GM12878 (cell line): ENCODE measurements at regions of chr12 and their contacts with region 1.

Region 1: GRCh38 chr12:89960011-89960507 is 251.4 kb upstream of the ATP2B1 start:
- DNase-seq: peak; percentile 68
- ATAC-seq: peak; percentile 90
- H3K4me3 ChIP-seq: peak overlapping the region; percentile 65; the same call in 1 of the 2 replicates
- H3K27ac ChIP-seq: peak overlapping the region; percentile 71
- H3K4me1 ChIP-seq: peaks cover 9% of the 10 kb centered on the region
- H3K27me3 ChIP-seq: no peaks in the 10 kb centered on the region
- CTCF ChIP-seq: no peak
- EP300 ChIP-seq: peak in 1 of 2 experiments; percentile 55; a peak in 1 of 4 replicates
- POLR2A ChIP-seq: no peak
- RAD21 ChIP-seq: no peak

Region 2: DNA sequence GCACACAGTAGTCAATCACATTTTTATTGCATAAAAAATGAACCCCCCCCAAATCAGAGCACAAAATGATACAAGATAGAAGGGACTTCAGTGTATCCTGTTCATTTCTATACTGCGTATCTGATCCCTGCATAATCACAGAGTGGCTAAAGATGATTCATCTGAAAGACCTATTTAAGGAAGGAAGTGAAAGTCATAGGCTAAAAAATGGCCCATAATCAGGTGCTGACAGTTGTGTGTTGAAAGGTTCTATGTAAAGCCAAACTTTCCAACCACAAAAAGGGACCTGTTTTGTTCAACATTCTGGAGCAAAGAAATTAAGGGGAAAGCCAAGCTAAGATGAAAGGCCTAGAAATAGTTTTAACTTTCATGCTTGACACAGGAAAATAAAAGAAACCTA is 103.6 kb before region 1 on chr12:
- CTCF ChIA-PET with region 1: no interaction called
- POLR2A ChIA-PET with region 1: interaction called, 12 read pairs
- RAD21 ChIA-PET with region 1: interaction called, 7 read pairs
- SMC1A ChIA-PET with region 1: interaction called, 9 read pairs
- in situ Hi-C with region 1: no loop called
- intact Hi-C with region 1: no loop called
- DNase-seq: peak; percentile 85
- ATAC-seq: peak; percentile 90
- H3K4me3 ChIP-seq: no peak overlapping the region
- H3K27ac ChIP-seq: peak overlapping the region; percentile 42
- H3K4me1 ChIP-seq: peaks cover 43% of the 10 kb centered on the region
- H3K27me3 ChIP-seq: no peaks in the 10 kb centered on the region
- CTCF ChIP-seq: no peak
- EP300 ChIP-seq: peak; percentile 97
- POLR2A ChIP-seq: no peak
- RAD21 ChIP-seq: peak; percentile 27; the same call in 1 of the 2 replicates

Region 3: GRCh38 chr12:89862511-89863179 is 97.4 kb before region 1 on chr12:
- CTCF ChIA-PET with region 1: interaction called, 3 read pairs
- POLR2A ChIA-PET with region 1: interaction called, 4 read pairs
- RAD21 ChIA-PET with region 1: interaction called, 10 read pairs
- SMC1A ChIA-PET with region 1: interaction called, 15 read pairs
- in situ Hi-C with region 1: no loop called
- intact Hi-C with region 1: no loop called
- DNase-seq: peak; percentile 79
- ATAC-seq: peak; percentile 75
- H3K4me3 ChIP-seq: peak overlapping the region; percentile 60
- H3K27ac ChIP-seq: peak overlapping the region; percentile 89
- H3K4me1 ChIP-seq: peaks cover 39% of the 10 kb centered on the region
- H3K27me3 ChIP-seq: no peaks in the 10 kb centered on the region
- CTCF ChIP-seq: no peak
- EP300 ChIP-seq: peak in 1 of 2 experiments; percentile 17; a peak in 1 of 4 replicates
- POLR2A ChIP-seq: peak; percentile 58
- RAD21 ChIP-seq: 0 out of 2 replicates have a peak, but pooled peaks have one; percentile 19

Region 4: DNA sequence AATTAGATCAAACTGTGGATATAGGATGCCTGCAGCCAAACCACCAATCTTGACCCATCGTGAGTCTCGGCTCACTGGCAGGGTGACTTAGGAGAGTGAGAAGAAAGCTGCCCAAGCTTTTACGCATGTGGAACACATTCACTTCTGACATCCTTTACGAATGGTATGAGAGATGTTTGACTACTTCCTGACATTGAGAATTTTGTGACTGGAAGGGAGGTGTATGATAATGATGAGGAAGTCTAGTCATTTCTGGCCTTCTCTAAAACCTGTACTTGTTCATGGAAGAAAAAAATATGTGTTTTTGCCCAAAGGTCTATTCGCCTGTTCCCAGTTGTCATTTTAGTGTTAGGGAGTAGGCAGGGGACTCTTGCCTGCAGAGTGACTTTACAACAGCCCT is 24.2 kb before region 1 on chr12:
- CTCF ChIA-PET with region 1: interaction called, 5 read pairs
- POLR2A ChIA-PET with region 1: no interaction called
- RAD21 ChIA-PET with region 1: no interaction called
- SMC1A ChIA-PET with region 1: interaction called, 21 read pairs
- in situ Hi-C with region 1: no loop called
- intact Hi-C with region 1: no loop called
- DNase-seq: peak; percentile 42
- ATAC-seq: peak; percentile 76
- H3K4me3 ChIP-seq: no peak overlapping the region
- H3K27ac ChIP-seq: peak overlapping the region; percentile 36
- H3K4me1 ChIP-seq: peaks cover 13% of the 10 kb centered on the region
- H3K27me3 ChIP-seq: no peaks in the 10 kb centered on the region
- CTCF ChIP-seq: no peak
- EP300 ChIP-seq: no peak
- POLR2A ChIP-seq: no peak
- RAD21 ChIP-seq: no peak

Region 5: GRCh38 chr12:89943463-89943862 is 16.6 kb before region 1 on chr12:
- CTCF ChIA-PET with region 1: interaction called, 3 read pairs
- POLR2A ChIA-PET with region 1: interaction called, 22 read pairs
- RAD21 ChIA-PET with region 1: interaction called, 3 read pairs
- SMC1A ChIA-PET with region 1: interaction called, 94 read pairs
- in situ Hi-C with region 1: no loop called
- intact Hi-C with region 1: no loop called
- DNase-seq: no peak
- ATAC-seq: peak; percentile 43; the same call in 2 of the 3 replicates
- H3K4me3 ChIP-seq: no peak overlapping the region
- H3K27ac ChIP-seq: no peak overlapping the region
- H3K4me1 ChIP-seq: peaks cover 4% of the 10 kb centered on the region; the same call in 1 of the 2 replicates
- H3K27me3 ChIP-seq: no peaks in the 10 kb centered on the region
- CTCF ChIP-seq: no peak
- EP300 ChIP-seq: no peak
- POLR2A ChIP-seq: no peak
- RAD21 ChIP-seq: no peak

Region 6: GRCh38 chr12:90013409-90013808 is 53.4 kb after region 1 on chr12:
- CTCF ChIA-PET with region 1: interaction called, 7 read pairs
- POLR2A ChIA-PET with region 1: no interaction called
- RAD21 ChIA-PET with region 1: interaction called, 12 read pairs
- SMC1A ChIA-PET with region 1: interaction called, 4 read pairs
- in situ Hi-C with region 1: no loop called
- intact Hi-C with region 1: no loop called
- DNase-seq: peak; percentile 8
- ATAC-seq: peak; percentile 94
- H3K4me3 ChIP-seq: no peak overlapping the region
- H3K27ac ChIP-seq: no peak overlapping the region
- H3K4me1 ChIP-seq: no peaks in the 10 kb centered on the region
- H3K27me3 ChIP-seq: no peaks in the 10 kb centered on the region
- CTCF ChIP-seq: peak; percentile 45 to 73 (median 54); a peak in 5 of 6 replicates
- EP300 ChIP-seq: no peak
- POLR2A ChIP-seq: no peak
- RAD21 ChIP-seq: peak; percentile 60

Region 7: DNA sequence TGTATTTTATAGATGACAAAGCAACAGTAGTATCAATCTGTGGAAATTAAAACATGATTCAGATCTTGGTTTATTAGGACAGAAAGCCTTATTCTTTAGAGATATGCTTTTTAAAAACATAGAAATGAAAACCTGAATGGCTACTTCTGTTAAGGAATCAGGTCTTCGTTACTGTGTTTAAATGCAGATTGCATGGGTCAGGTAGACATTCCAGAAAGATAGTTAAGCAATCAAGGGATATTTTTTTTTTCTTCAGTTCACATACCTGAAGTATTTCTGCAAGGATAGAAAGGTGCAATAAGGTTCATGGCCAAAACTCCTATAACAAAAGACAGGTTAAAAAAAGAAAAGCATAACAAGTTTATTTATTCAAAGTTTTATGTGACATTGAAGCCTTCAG is 417.2 kb after region 1 on chr12:
- CTCF ChIA-PET with region 1: no interaction called
- POLR2A ChIA-PET with region 1: no interaction called
- RAD21 ChIA-PET with region 1: no interaction called
- SMC1A ChIA-PET with region 1: no interaction called
- in situ Hi-C with region 1: no loop called
- intact Hi-C with region 1: no loop called
- DNase-seq: no peak
- ATAC-seq: no peak
- H3K4me3 ChIP-seq: no peak overlapping the region
- H3K27ac ChIP-seq: no peak overlapping the region
- H3K4me1 ChIP-seq: no peaks in the 10 kb centered on the region
- H3K27me3 ChIP-seq: no peaks in the 10 kb centered on the region
- CTCF ChIP-seq: no peak
- EP300 ChIP-seq: no peak
- POLR2A ChIP-seq: no peak
- RAD21 ChIP-seq: no peak